Heart left ventricle (tissue), 16 donors: ENCODE measurements at regions of chr13 and their contacts with region 1.

Region 1: DNA sequence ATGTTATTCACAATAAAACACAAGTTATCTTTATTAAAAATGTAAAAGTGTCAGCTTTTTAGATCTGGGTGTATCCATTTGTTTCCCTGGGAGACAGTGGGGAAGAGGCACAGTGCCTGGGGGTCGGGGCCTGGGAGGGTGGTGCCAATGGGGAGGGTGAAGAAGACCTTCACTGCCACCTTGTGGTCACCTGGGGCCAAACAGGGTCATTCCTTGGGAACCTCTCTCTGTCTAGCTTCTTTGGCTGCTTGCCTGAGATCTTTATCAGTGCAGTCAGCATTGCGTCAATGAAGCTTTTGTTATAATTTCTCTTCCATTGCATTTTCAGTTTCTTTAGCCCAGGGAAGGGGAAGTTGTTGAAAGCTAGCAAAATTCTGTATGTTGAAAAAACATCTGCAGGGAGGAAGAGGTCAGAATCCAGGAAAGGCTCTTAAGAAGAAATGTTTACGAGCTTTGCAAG is 39.1 kb downstream of the PCDH8 start:
- DNase-seq: peak in 4 of 5 donors; percentile 37 to 70 (median 54)
- ATAC-seq: peak in 3 of 4 donors; percentile 49 to 91 (median 53)
- H3K4me3 ChIP-seq: no peak overlapping the region
- H3K27ac ChIP-seq: no peak overlapping the region
- H3K4me1 ChIP-seq: peaks cover 0 to 8% (median 0%) of the 10 kb centered on the region in 12 donors
- H3K27me3 ChIP-seq: peaks cover 0 to 6% (median 0%) of the 10 kb centered on the region in 9 donors
- CTCF ChIP-seq: peak; percentile 38 to 70 (median 56)
- POLR2A ChIP-seq: no peak

Region 2: GRCh38 chr13:52665325-52665724 is 144.0 kb before region 1 on chr13:
- intact Hi-C with region 1: loop called in 1 of 10 experiments (anchors 10 kb)
- DNase-seq: no peak
- ATAC-seq: no peak
- H3K4me3 ChIP-seq: no peak overlapping the region
- H3K27ac ChIP-seq: no peak overlapping the region
- H3K4me1 ChIP-seq: no peaks in the 10 kb centered on the region
- H3K27me3 ChIP-seq: no peaks in the 10 kb centered on the region
- CTCF ChIP-seq: peak in 11 of 12 donors; percentile 20 to 55 (median 40)
- POLR2A ChIP-seq: no peak

Region 3: GRCh38 chr13:53126841-53127245 is 317.5 kb after region 1 on chr13:
- intact Hi-C with region 1: no loop called
- DNase-seq: peak in 2 of 5 donors; percentile 15 to 24
- ATAC-seq: peak in 1 of 4 donors; percentile 59
- H3K4me3 ChIP-seq: no peak overlapping the region
- H3K27ac ChIP-seq: no peak overlapping the region
- H3K4me1 ChIP-seq: no peaks in the 10 kb centered on the region
- H3K27me3 ChIP-seq: peaks cover 0 to 6% (median 0%) of the 10 kb centered on the region in 9 donors
- CTCF ChIP-seq: no peak
- POLR2A ChIP-seq: no peak